ENCODE measurements at regions of chr16 and their contacts with region 1.

Region 1: GRCh38 chr16:84738255-84739038 is 38.6 kb downstream of the USP10 start:
- DNase-seq: peak; percentile 86
- ATAC-seq: peak; percentile 86
- H3K4me3 Mint-ChIP-seq: no peak overlapping the region
- H3K27ac Mint-ChIP-seq: no peak overlapping the region
- H3K4me1 Mint-ChIP-seq: peaks cover 59% of the 10 kb centered on the region
- H3K27me3 Mint-ChIP-seq: no peaks in the 10 kb centered on the region

Region 2: GRCh38 chr16:84555418-84556195 is 182.8 kb before region 1 on chr16:
- CTCF ChIA-PET with region 1: interaction called, 10 read pairs
- POLR2A ChIA-PET with region 1: no interaction called
- DNase-seq: no peak
- ATAC-seq: no peak
- H3K4me3 Mint-ChIP-seq: no peak overlapping the region
- H3K27ac Mint-ChIP-seq: peak overlapping the region; percentile 53
- H3K4me1 Mint-ChIP-seq: peaks cover 35% of the 10 kb centered on the region
- H3K27me3 Mint-ChIP-seq: no peaks in the 10 kb centered on the region

Region 3: DNA sequence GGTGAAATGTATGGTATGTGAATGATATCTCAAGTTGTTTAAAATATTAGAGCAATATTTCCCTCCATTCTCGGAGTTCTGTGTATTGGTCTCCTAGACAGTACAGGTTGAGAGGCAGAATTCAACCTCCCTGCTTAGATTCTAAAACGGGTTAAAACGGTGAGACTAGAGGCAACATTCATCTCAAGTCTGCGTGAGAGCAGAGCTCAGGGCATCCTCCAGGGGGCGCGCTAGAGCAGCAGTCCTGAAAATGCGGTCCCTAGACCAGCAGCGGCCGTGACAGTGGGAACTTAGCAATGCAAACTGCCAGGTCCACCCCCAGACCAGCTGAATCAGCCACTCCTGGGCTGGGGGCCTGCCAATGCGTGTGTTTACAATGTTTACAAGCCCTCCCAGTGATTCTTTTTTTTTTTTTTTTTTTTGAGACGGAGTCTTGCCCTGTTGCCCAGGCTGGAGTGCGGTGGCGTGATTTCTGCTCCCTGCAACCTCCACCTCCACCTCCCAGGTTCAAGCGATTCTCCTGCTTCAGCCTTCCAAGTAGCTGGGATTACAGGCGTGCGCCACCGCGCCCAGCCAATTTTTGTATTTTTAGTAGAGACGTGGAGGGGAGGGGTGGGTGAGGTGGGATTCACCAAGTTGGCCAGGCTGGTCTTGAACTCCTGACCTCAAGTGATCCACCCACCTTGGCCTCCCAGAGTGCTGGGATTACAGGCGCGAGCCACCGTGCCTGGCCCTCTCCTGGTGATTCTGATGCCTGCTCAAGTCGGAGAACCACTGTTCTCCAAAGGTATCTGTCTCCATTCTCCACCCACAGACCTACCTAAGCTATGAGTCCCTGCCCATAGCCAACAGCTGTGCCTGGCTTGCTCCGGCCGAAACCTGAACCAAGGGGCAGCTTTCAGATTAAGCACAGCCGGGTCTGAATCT is 65.9 kb before region 1 on chr16:
- CTCF ChIA-PET with region 1: interaction called, 55 read pairs
- POLR2A ChIA-PET with region 1: no interaction called
- DNase-seq: peak; percentile 84
- ATAC-seq: peak; percentile 94
- H3K4me3 Mint-ChIP-seq: no peak overlapping the region
- H3K27ac Mint-ChIP-seq: no peak overlapping the region
- H3K4me1 Mint-ChIP-seq: peaks cover 10% of the 10 kb centered on the region
- H3K27me3 Mint-ChIP-seq: peaks cover 11% of the 10 kb centered on the region

Region 4: GRCh38 chr16:84726079-84726668 is 12.3 kb before region 1 on chr16:
- CTCF ChIA-PET with region 1: interaction called, 226 read pairs
- POLR2A ChIA-PET with region 1: no interaction called
- DNase-seq: peak; percentile 88
- ATAC-seq: peak; percentile 75
- H3K4me3 Mint-ChIP-seq: peak overlapping the region; percentile 37
- H3K27ac Mint-ChIP-seq: no peak overlapping the region
- H3K4me1 Mint-ChIP-seq: peaks cover 73% of the 10 kb centered on the region
- H3K27me3 Mint-ChIP-seq: no peaks in the 10 kb centered on the region

Region 5: GRCh38 chr16:84952335-84953189 is 214.1 kb after region 1 on chr16:
- CTCF ChIA-PET with region 1: interaction called, 15 read pairs
- POLR2A ChIA-PET with region 1: no interaction called
- DNase-seq: peak; percentile 81
- ATAC-seq: peak; percentile 83
- H3K4me3 Mint-ChIP-seq: no peak overlapping the region
- H3K27ac Mint-ChIP-seq: no peak overlapping the region
- H3K4me1 Mint-ChIP-seq: peaks cover 6% of the 10 kb centered on the region
- H3K27me3 Mint-ChIP-seq: peaks cover 7% of the 10 kb centered on the region